K562 (cell line): ENCODE measurements at regions of chr5 and their contacts with region 1.

Region 1: DNA sequence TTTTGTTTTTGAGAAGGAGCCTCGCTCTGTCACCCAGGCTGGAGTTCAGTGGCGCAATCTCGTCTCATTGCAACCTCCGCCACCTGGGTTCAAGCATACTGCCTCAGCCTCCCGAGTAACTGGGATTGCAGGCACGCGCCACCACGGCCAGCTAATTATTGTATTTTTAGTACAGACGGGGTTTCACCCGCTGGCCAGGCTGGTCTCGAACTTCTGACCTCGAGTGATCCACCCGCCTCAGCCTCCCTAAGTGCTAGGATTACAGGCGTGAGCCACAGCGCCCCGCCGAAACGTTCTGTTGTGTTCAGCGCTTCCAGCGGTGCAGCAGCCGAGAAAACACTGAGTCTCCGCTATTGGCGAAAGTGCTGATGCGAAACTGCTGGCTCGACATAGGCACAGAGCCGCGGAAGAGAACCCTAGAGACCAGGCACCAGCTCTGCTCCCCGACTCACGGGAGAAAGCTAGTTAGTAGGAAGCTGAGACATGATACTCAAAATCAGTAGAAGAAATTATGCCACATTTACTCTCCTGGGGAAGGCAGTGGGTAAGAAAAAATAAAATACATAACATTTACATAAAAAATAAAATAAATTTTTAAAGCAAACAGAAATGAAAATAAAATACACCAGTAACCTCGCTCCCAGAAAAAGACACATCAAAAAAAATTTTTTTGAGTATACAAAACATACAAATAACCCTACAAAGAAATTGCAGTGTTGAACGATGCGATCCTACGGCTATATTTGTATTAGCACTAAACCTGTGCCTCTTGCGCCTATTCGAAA is 31.6 kb downstream of the ANXA2R start:
- DNase-seq: peak; percentile 72 to 98 (median 80)
- ATAC-seq: peak; percentile 85
- H3K4me3 ChIP-seq: peak overlapping the region; percentile 46
- H3K27ac ChIP-seq: peak overlapping the region; percentile 93
- H3K4me1 ChIP-seq: peaks cover 16 to 21% of the 10 kb centered on the region in 2 experiments; a peak in 4 of 5 replicates
- H3K27me3 ChIP-seq: no peaks in the 10 kb centered on the region
- CTCF ChIP-seq: peak; percentile 53 to 62 (median 59)
- EP300 ChIP-seq: peak; percentile 99
- POLR2A ChIP-seq: peak; percentile 76
- RAD21 ChIP-seq: peak; percentile 22 to 54; a peak in 3 of 4 replicates

Region 2: GRCh38 chr5:43019614-43020293 is 11.2 kb after region 1 on chr5:
- CTCF ChIA-PET with region 1: no interaction called
- POLR2A ChIA-PET with region 1: interaction called, 13 read pairs
- in situ Hi-C with region 1: no loop called
- intact Hi-C with region 1: no loop called
- DNase-seq: no peak
- ATAC-seq: no peak
- H3K4me3 ChIP-seq: no peak overlapping the region
- H3K27ac ChIP-seq: no peak overlapping the region
- H3K4me1 ChIP-seq: peaks cover 0 to 5% of the 10 kb centered on the region in 2 experiments; a peak in 2 of 5 replicates
- H3K27me3 ChIP-seq: no peaks in the 10 kb centered on the region
- CTCF ChIP-seq: no peak
- EP300 ChIP-seq: no peak
- POLR2A ChIP-seq: no peak
- RAD21 ChIP-seq: no peak

Region 3: DNA sequence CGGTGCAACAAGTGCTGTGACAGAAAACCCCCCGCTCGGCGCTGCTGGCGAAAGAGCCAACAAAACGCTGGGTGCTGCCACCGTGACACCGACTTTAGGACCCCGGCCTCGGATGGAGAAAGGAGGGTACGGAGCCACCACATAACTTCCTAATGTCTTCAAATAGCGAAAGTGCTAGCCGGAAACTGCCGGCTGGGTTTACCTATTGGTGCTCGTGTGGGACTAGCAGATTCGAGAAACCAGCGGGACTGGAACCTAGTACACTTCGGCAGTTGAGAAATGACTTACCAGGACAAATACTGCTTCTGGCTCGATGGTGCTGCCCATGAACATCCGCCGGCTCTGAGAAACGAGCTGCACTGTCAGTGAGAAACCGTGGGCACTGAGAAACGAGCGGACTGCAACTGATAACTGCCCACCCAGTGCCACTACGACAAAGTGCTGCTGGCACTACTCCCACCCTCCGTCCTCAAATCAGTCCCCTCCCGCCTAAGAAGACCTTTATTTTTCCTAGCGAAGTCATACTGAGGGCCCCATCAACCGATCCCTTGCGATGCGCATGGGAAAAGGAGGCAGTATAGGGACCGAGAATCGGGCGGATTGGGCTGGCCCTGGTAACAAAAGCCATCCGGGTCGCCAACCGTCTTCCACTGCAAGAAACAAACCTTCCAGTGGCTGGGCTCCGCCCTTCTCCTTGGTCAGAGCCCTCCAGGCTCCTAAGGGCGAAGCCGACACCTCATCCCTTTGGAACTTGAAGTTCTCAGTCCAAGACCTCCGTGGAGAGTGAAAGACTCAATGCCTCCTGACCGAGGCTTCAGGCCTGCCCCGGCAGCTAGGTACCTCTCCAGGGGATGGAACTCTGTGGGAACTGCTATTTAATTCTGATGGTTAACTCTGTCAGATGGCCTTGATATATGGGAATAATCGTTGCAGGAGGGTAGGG is 58.5 kb after region 1 on chr5:
- CTCF ChIA-PET with region 1: interaction called, 3 read pairs
- POLR2A ChIA-PET with region 1: interaction called, 12 read pairs
- in situ Hi-C with region 1: no loop called
- intact Hi-C with region 1: loop called (anchors 1 kb)
- DNase-seq: peak; percentile 45 to 95 (median 58)
- ATAC-seq: peak; percentile 60
- H3K4me3 ChIP-seq: peak overlapping the region; percentile 80
- H3K27ac ChIP-seq: peak overlapping the region; percentile 97
- H3K4me1 ChIP-seq: peaks cover 14 to 25% of the 10 kb centered on the region in 2 experiments
- H3K27me3 ChIP-seq: no peaks in the 10 kb centered on the region; a peak in 1 of 5 replicates
- CTCF ChIP-seq: 0 out of 6 replicates have a peak, but pooled peaks of 1 of the 3 experiments have one; percentile 2
- EP300 ChIP-seq: peak; percentile 100
- POLR2A ChIP-seq: peak; percentile 78
- RAD21 ChIP-seq: no peak